Psoas muscle (tissue), 8 donors: ENCODE measurements at regions of chr11 and their contacts with region 1.

Region 1: DNA sequence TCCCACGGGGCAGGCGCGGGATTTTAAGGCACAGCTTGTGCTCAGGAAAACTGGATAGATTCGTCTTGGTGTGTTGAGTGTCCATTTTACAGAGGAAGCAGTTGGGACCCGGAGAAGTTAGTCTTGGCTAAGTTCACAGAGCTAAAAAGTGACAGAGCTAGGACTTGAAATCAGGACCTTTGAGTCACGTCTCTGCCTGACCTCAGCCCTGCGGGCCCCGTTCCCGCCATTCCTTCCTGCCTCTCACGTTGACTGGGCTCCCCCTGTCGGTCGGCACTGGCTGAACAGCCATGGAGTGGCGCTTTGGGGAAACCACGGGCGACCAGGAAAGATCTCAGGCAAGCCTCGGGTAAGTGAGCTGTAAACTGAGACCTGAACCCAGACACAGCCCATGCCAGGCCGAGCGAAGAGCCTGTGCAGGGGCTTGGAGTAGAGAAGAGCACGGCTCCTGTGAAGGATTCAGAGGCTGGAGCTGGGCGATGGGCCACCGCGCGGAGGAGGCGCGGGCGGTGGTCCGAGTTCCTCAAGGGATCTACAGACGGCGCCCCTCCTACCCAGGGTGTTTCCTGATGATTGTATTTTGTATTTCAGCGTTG is 54.1 kb downstream of the WNT11 start:
- DNase-seq: peak; percentile 91 to 95
- ATAC-seq: peak; percentile 92 to 99 (median 98)
- H3K4me3 ChIP-seq: peak overlapping the region; percentile 63
- H3K27ac ChIP-seq: no peak overlapping the region
- H3K4me1 ChIP-seq: peaks cover 8% of the 10 kb centered on the region
- H3K27me3 ChIP-seq: no peaks in the 10 kb centered on the region
- CTCF ChIP-seq: peak; percentile 94

Region 2: GRCh38 chr11:75802913-75803820 is 349.0 kb before region 1 on chr11:
- intact Hi-C with region 1: loop called (anchors 5 to 10 kb)
- DNase-seq: peak; percentile 66 to 72
- ATAC-seq: peak; percentile 88 to 96 (median 91)
- H3K4me3 ChIP-seq: no peak overlapping the region
- H3K27ac ChIP-seq: no peak overlapping the region
- H3K4me1 ChIP-seq: peaks cover 4% of the 10 kb centered on the region
- H3K27me3 ChIP-seq: no peaks in the 10 kb centered on the region
- CTCF ChIP-seq: peak; percentile 95

Region 3: DNA sequence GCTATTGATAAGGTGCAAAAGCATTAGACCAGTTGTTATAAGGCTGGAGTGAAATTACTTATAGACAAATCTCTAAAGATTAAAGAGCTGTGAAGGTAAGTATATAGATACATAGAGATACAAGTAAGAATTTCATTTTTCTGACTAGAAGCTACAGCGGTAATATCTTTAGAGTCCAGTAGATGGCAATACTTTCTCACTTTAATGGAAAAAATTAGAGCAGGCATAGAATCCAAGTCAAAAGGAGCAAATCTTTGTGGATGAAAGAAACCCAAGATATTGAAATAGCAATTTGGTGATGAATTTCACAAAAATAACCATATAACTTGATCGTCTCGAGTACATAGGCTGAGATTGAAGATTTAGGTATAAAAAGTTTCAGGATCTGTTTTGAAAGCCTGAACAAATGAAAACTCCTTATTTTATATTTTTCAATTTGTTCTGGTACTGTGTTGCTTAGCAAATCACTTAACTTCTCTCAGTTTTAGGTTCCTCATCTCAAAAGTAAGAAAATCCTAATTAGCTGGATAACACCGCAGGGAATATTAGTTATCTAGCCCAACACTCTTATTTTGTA is 255.3 kb before region 1 on chr11:
- intact Hi-C with region 1: loop called (anchors 2 kb)
- DNase-seq: no peak
- ATAC-seq: peak in 3 of 4 donors; percentile 48 to 76 (median 54)
- H3K4me3 ChIP-seq: no peak overlapping the region
- H3K27ac ChIP-seq: no peak overlapping the region
- H3K4me1 ChIP-seq: no peaks in the 10 kb centered on the region
- H3K27me3 ChIP-seq: no peaks in the 10 kb centered on the region
- CTCF ChIP-seq: peak; percentile 74

Region 4: DNA sequence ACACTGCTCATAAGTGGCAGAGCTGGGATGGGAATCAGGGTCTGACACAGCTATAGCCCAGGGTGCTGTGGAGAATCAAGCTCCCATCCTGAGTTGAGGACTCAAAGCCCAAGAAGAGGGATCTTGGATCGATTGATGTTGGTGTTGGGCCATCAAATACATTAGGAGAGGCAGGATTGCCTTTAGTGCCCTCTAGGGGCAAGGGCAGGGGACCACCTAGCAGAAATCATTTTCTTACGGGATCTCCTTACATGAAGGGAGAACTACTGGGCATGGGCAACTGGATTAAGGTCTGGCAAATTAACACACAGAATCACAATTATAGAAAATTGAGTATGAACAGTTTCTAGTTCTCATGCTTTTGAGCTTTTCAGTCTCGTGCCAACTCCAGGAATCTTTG is 267.7 kb after region 1 on chr11:
- intact Hi-C with region 1: no loop called
- DNase-seq: no peak
- ATAC-seq: no peak
- H3K4me3 ChIP-seq: no peak overlapping the region
- H3K27ac ChIP-seq: no peak overlapping the region
- H3K4me1 ChIP-seq: no peaks in the 10 kb centered on the region
- H3K27me3 ChIP-seq: no peaks in the 10 kb centered on the region
- CTCF ChIP-seq: peak; percentile 22